ENCODE measurements at regions of chr7 and their contacts with region 1.

Region 1: GRCh38 chr7:44534501-44534900 is 6.6 kb downstream of the NPC1L1 start:
- DNase-seq: peak; percentile 18
- ATAC-seq: peak; percentile 64; the same call in 1 of the 2 replicates
- H3K4me3 ChIP-seq: no peak overlapping the region
- H3K27ac ChIP-seq: no peak overlapping the region
- H3K4me1 ChIP-seq: no peaks in the 10 kb centered on the region
- H3K27me3 ChIP-seq: no peaks in the 10 kb centered on the region
- CTCF ChIP-seq: no peak; the same call in 1 of the 2 replicates

Region 2: DNA sequence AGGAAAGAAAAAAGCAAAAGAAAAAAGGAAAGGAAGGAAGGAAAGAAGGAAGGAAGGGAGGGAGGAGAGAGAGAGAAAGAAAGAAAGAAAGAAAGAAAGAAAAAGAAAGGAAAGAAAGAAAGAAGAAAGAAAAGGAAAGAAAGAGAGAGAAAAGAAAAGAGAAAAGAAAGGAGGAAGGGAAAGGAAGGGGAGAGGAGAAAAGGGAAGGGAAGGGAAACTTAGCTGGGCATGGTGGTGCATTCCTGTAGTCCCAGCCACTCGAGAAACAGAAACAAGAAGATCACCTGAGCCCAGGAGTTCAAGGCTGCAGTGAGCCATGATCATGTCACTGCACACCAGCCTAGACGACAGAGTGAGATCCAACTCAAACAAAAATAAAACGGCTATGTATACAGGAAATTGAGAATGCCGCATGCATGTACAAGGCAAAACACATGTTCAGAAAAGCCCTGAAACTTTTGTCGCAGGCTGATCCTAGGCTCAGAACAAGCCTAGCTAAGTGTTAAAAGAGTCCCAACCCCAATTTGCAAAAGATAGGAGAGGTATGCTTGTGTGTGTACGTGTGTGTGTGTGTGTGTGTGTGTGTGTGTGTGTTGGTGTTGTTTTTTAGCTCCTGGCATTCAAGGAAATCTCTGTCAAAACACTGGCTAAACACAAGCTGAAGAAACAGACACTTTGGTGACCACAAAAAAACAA is 13.2 kb after region 1 on chr7:
- CTCF ChIA-PET with region 1: interaction called, 20 read pairs
- POLR2A ChIA-PET with region 1: no interaction called
- in situ Hi-C with region 1: no loop called
- intact Hi-C with region 1: no loop called
- DNase-seq: no peak
- ATAC-seq: 0 out of 2 replicates have a peak, but pooled peaks have one; percentile 49
- H3K4me3 ChIP-seq: no peak overlapping the region
- H3K27ac ChIP-seq: no peak overlapping the region
- H3K4me1 ChIP-seq: no peaks in the 10 kb centered on the region
- H3K27me3 ChIP-seq: peaks cover 11% of the 10 kb centered on the region; the same call in 1 of the 2 replicates
- CTCF ChIP-seq: no peak

Region 3: GRCh38 chr7:44791278-44792219 is 257.0 kb after region 1 on chr7:
- CTCF ChIA-PET with region 1: no interaction called
- POLR2A ChIA-PET with region 1: no interaction called
- in situ Hi-C with region 1: no loop called
- intact Hi-C with region 1: no loop called
- DNase-seq: no peak
- ATAC-seq: no peak
- H3K4me3 ChIP-seq: no peak overlapping the region
- H3K27ac ChIP-seq: no peak overlapping the region
- H3K4me1 ChIP-seq: peaks cover 10% of the 10 kb centered on the region
- H3K27me3 ChIP-seq: no peaks in the 10 kb centered on the region
- CTCF ChIP-seq: no peak

Measured in Panc1 (cell line).